Left ventricle myocardium superior (tissue), 1 donor: ENCODE measurements at regions of chr2 and their contacts with region 1.

Region 1: GRCh38 chr2:240143801-240144648 is 3.6 kb upstream of the OTOS start:
- DNase-seq: peak; percentile 80
- ATAC-seq: peak; percentile 84

Region 2: GRCh38 chr2:239035361-239036078 is 1108.5 kb before region 1 on chr2:
- intact Hi-C with region 1: loop called (anchors 10 kb)
- DNase-seq: peak; percentile 75
- ATAC-seq: peak; percentile 92

Region 3: GRCh38 chr2:239482778-239483712 is 661.0 kb before region 1 on chr2:
- intact Hi-C with region 1: no loop called
- DNase-seq: no peak
- ATAC-seq: no peak

Region 4: DNA sequence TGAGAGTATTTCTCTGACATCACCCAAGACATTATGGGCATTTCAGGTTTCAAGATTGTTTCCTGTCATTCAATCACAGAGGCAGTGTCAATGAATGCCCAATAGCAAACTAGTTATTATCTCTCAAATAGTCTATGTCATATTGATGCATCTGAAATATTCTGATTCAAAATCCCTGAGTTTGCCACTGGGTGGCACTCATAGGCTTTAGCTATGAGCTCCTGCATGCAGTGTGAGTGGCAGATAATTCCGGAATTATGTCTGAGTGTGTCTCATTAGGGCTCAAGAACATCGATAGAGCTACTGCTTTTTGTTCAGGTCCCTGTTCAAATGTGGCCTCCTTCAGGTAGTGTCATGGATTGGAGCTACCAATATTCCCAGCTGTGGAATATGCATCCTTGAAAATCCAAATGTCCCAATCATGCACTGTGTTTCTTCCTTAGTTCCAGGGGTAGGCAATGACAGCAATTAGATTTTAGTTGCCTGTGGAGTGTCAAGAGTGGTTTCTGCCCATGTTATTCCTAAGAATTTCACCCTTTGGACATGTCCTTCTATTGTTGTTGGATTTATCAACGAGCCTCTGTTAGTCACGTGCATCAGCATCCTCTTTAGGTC is 82.9 kb before region 1 on chr2:
- intact Hi-C with region 1: loop called (anchors 5 kb)
- DNase-seq: no peak
- ATAC-seq: peak; percentile 49

Region 5: GRCh38 chr2:240452457-240453256 is 308.6 kb after region 1 on chr2:
- intact Hi-C with region 1: no loop called
- DNase-seq: peak; percentile 86
- ATAC-seq: peak; percentile 75